GM10248 (cell line): ENCODE measurements at regions of chr4 and their contacts with region 1.

Region 1: GRCh38 chr4:101835121-101835904 is 44.8 kb downstream of the BANK1 start:
- DNase-seq: no peak
- CTCF ChIP-seq: no peak

Region 2: GRCh38 chr4:101774807-101775206 is 60.5 kb before region 1 on chr4:
- CTCF ChIA-PET with region 1: no interaction called
- POLR2A ChIA-PET with region 1: no interaction called
- DNase-seq: no peak
- CTCF ChIP-seq: no peak

Region 3: GRCh38 chr4:101806914-101807313 is 28.4 kb before region 1 on chr4:
- CTCF ChIA-PET with region 1: interaction called, 11 read pairs
- POLR2A ChIA-PET with region 1: no interaction called
- DNase-seq: peak; percentile 53
- CTCF ChIP-seq: no peak

Region 4: GRCh38 chr4:101850698-101851097 is 15.4 kb after region 1 on chr4:
- CTCF ChIA-PET with region 1: interaction called, 12 read pairs
- POLR2A ChIA-PET with region 1: no interaction called
- DNase-seq: no peak
- CTCF ChIP-seq: no peak

Region 5: GRCh38 chr4:101993002-101993841 is 157.9 kb after region 1 on chr4:
- CTCF ChIA-PET with region 1: no interaction called
- POLR2A ChIA-PET with region 1: no interaction called
- DNase-seq: no peak
- CTCF ChIP-seq: no peak

Region 6: DNA sequence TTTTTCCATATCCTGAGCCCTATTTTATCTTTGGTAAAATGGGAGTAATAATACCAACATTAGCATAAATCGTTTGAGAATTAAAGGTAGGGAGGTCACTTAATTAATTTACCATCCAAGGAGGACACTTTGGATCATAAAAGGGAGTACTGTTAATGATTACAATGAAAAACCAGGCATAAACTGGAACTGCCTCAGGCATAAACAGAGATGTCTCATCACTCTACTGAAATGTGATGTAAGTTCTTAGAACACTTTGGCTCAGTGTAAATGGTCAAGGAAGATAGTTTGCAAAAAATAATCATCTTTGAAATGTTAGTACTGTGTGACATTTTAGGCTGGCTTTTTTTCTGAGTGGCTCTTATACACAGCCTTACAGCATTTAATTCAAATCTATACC is 241.3 kb after region 1 on chr4:
- CTCF ChIA-PET with region 1: no interaction called
- POLR2A ChIA-PET with region 1: no interaction called
- DNase-seq: no peak
- CTCF ChIP-seq: no peak